Uterus (tissue), 4 donors: ENCODE measurements at regions of chr20 and their contacts with region 1.

Region 1: DNA sequence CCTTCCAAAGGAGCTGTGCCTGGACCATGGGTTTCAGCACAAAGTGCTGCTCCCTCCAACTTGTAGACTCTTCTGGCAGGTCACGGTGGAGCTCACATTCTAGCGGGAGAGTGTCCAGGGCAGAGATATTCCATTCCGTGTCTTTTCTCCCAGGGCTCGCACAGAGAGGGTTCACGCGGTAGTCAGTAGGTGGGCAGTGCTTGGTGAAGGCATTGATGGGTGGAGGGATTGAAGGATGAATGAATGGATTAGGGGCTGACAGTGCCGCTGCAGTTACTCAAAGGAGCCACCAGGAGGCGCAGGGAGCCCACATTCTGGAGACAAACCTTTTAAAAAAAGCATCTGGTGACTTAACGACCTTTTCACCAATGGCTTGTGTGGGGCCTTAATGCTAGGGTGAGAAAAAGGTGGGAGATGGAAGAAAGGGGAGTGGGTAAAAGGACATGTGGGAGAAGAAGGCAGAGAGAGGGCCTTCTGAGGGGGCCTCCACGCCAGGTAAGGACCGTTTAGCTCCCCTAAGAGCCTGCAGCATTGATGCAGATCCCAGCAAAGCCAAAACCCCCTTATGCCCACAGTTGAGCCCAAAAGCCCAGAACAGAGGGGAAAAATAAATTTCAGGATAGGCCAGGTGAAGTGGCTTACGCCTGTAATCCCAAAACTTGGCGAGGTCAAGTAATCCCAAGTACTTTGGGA is 17.5 kb upstream of the FAM110A start:
- DNase-seq: peak; percentile 43 to 51
- H3K4me3 ChIP-seq: no peak overlapping the region
- H3K27ac ChIP-seq: no peak overlapping the region
- H3K4me1 ChIP-seq: no peaks in the 10 kb centered on the region
- H3K27me3 ChIP-seq: no peaks in the 10 kb centered on the region
- CTCF ChIP-seq: peak; percentile 89 to 95 (median 92)
- POLR2A ChIP-seq: no peak

Region 2: DNA sequence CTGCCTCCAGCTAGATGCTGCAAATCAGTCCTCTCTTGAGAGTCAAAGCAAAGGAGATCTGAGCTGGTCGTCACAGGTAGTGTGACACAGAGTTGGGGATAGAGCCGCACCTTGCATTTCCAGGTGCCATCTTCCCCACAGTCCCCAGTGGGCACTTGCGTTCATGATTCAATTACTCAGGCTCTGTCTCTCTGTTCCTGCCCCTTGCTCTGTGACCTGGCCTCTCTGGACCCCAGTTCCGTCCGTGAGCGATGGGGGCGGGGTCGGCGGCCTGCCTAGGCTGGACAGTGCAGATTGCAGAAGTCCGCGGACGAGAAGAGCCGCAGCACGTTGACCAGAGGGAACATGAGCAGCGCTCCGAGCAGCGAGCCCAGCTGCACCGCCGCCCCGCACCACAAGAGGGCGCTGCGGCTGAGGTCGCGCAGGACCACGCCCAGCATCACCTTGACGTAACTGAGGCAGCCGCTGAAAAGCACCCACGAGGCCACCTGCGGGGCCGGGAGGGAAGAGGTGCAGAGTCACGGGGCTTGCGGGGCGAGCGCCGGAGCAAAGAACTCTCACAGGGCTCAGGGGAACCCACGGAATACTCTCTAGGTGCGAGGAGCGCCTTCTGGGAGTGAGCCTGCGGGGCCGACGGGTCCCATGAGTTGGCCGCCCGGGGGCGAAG is 55.2 kb before region 1 on chr20:
- intact Hi-C with region 1: no loop called
- DNase-seq: no peak
- H3K4me3 ChIP-seq: no peak overlapping the region
- H3K27ac ChIP-seq: no peak overlapping the region
- H3K4me1 ChIP-seq: no peaks in the 10 kb centered on the region
- H3K27me3 ChIP-seq: no peaks in the 10 kb centered on the region
- CTCF ChIP-seq: no peak
- POLR2A ChIP-seq: no peak

Region 3: GRCh38 chr20:956330-956951 is 140.4 kb after region 1 on chr20:
- intact Hi-C with region 1: loop called (anchors 5 kb)
- DNase-seq: peak; percentile 28 to 36
- H3K4me3 ChIP-seq: no peak overlapping the region
- H3K27ac ChIP-seq: no peak overlapping the region
- H3K4me1 ChIP-seq: no peaks in the 10 kb centered on the region
- H3K27me3 ChIP-seq: no peaks in the 10 kb centered on the region
- CTCF ChIP-seq: peak; percentile 74 to 95 (median 86)
- POLR2A ChIP-seq: no peak

Region 4: GRCh38 chr20:1212607-1213396 is 396.7 kb after region 1 on chr20:
- intact Hi-C with region 1: loop called (anchors 5 kb)
- DNase-seq: peak; percentile 42 to 50
- H3K4me3 ChIP-seq: no peak overlapping the region
- H3K27ac ChIP-seq: no peak overlapping the region
- H3K4me1 ChIP-seq: no peaks in the 10 kb centered on the region
- H3K27me3 ChIP-seq: peaks cover 0 to 5% of the 10 kb centered on the region in 2 donors
- CTCF ChIP-seq: peak; percentile 56 to 75 (median 72)
- POLR2A ChIP-seq: no peak